Breast epithelium (tissue), 4 donors: ENCODE measurements at regions of chr2 and their contacts with region 1.

Region 1: DNA sequence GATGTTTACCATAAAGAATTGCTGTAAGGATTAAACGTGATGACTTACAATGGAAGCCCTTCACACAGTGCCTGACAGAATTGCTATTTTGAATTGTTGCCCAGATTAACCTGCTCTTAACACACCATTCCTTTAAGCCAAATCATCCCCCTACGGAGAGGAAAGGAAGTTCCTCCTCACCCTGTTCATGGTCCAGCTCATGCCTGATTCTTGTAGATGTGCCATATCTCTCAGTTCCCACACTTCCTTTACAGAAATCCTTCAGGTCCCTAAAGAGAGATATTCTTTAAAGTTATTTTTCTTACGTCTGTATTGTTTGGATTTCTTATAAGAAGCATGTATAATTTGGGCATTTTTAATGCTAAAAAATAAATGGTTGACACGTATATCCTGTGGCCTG is 127.5 kb upstream of the DAPL1 start:
- DNase-seq: no peak
- H3K4me3 ChIP-seq: no peak overlapping the region
- H3K27ac ChIP-seq: peak overlapping the region; percentile 67
- H3K4me1 ChIP-seq: peaks cover 0 to 3% of the 10 kb centered on the region in 2 donors
- H3K27me3 ChIP-seq: no peaks in the 10 kb centered on the region
- CTCF ChIP-seq: no peak
- POLR2A ChIP-seq: no peak

Region 2: DNA sequence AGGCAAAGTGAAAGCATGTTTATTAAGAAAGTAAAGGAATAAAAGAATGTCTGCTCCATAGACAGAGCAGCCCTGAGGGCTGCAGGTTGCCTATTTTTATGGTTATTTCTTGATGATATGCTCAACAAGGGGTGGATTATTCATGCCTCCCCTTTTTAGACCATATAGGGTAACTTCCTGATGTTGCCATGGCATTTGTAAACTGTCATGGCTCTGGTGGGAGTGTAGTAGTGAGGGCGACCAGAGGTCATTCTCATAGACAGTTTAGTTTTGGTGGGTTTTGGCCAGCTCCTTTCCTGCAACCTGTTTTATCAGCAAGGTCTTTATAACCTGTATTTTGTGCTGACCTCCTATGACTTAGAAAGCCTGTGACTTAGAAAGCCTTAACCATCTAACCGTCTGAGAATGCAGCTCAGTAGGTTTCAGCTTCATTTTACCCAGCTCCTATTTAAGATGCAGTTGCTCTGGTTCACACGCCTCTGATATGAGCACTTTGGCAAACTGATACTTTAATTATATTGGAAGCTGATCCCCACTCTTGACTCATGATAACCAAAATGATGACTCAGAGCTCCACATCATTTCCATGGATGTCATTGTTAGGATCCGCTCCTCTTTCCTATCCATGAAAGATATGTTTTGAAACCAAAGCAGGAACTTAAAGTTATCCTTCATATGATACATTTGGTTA is 1327.5 kb before region 1 on chr2:
- intact Hi-C with region 1: loop called (anchors 5 kb)
- DNase-seq: no peak
- H3K4me3 ChIP-seq: no peak overlapping the region
- H3K27ac ChIP-seq: no peak overlapping the region
- H3K4me1 ChIP-seq: no peaks in the 10 kb centered on the region
- H3K27me3 ChIP-seq: no peaks in the 10 kb centered on the region
- CTCF ChIP-seq: no peak
- POLR2A ChIP-seq: no peak

Region 3: DNA sequence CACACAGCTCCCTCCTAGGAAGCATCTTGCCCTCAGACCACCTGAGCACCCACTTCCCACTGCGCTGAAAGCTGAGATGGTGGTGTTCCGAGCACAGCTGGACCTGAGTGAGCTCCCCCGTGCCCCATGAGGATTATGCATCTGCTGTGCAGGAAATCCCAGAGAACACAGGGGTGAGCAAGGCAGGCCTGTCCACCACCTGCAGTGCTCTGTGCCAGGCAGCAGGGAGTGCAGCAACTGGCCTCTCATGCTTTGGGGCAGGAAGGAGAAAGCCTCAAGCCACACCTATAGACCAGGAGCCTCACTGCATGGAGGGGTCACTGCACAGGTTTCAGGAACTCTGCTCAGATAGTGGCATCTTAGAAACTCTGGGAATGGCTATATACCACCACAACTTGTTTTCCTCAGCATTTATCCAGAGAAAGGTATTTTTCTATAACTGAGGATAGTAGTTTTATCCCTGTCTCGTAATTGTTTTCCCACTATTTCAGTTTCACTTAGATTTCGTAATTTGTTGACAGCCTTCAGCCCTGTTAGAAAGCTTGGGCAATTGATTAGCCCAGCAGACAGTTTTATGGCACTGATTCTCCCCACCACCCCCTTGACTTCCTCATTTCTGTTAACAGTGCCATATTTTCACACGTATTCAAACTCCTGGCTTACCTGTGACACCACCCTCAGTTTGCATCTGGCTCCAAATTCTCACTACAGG is 16.8 kb before region 1 on chr2:
- intact Hi-C with region 1: no loop called
- DNase-seq: no peak
- H3K4me3 ChIP-seq: no peak overlapping the region
- H3K27ac ChIP-seq: no peak overlapping the region
- H3K4me1 ChIP-seq: no peaks in the 10 kb centered on the region
- H3K27me3 ChIP-seq: no peaks in the 10 kb centered on the region
- CTCF ChIP-seq: no peak
- POLR2A ChIP-seq: no peak

Region 4: GRCh38 chr2:160613466-160614153 is 1946.0 kb after region 1 on chr2:
- intact Hi-C with region 1: no loop called
- DNase-seq: no peak
- H3K4me3 ChIP-seq: no peak overlapping the region
- H3K27ac ChIP-seq: no peak overlapping the region
- H3K4me1 ChIP-seq: no peaks in the 10 kb centered on the region
- H3K27me3 ChIP-seq: no peaks in the 10 kb centered on the region
- CTCF ChIP-seq: no peak
- POLR2A ChIP-seq: no peak